Naive thymus-derived CD4-positive, alpha-beta T cell (primary cell): ENCODE measurements at regions of chr5 and their contacts with region 1.

Region 1: GRCh38 chr5:74640450-74640953 is at the start of gene ENC1:
- DNase-seq: peak; percentile 64 to 88 (median 75)
- ATAC-seq: peak; percentile 86
- H3K4me3 ChIP-seq: peak within 1 kb of the TSS; percentile 42
- H3K4me3 Mint-ChIP-seq: peak within 1 kb of the TSS; percentile 81 to 99 (median 92)
- H3K27ac ChIP-seq: peak within 1 kb of the TSS; percentile 72
- H3K27ac Mint-ChIP-seq: peak within 1 kb of the TSS in 8 of 9 donors; percentile 42 to 90 (median 74)
- H3K4me1 ChIP-seq: peaks cover 3 to 4% of the 10 kb centered on the region in 2 donors
- H3K4me1 Mint-ChIP-seq: peaks cover 28 to 45% (median 31%) of the 10 kb centered on the region in 7 donors
- H3K27me3 ChIP-seq: no peaks in the 10 kb centered on the region
- H3K27me3 Mint-ChIP-seq: peaks cover 0 to 79% (median 34%) of the 10 kb centered on the region in 5 donors
- total RNA-seq, gene ENC1: 1.3 to 18.1 (median 1.6) TPM

Region 2: DNA sequence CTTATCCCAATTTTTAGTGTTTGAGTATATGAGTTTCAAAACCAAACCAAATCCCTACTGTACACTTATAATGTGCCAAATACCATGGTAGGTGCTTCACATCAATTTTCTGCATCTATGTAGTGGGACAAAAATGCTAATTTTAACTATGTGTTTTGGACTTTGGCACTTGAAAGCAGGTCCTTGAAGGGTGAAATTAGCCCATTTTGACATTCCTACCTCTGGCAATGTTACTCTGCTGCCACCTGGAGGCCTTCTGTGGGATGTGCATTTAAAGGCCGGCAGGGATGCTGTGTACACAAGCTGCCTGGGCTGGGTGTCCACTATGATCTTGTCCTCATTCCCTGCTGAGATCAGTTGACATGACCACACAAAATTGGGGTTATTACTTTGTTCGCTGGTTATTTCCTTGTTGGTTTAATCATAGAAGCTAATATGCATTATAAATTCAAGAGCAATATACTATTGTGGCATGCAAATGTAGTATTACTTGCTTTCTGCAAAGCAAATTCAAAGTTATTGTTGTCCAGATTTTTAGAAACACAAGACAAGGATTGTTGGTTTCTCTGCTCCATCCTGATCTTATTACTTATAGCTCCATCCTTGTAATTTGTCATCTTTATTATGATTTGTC is 847.7 kb before region 1 on chr5:
- CTCF ChIA-PET with region 1: no interaction called
- POLR2A ChIA-PET with region 1: no interaction called
- intact Hi-C with region 1: loop called in 1 of 2 experiments (anchors 10 kb)
- DNase-seq: peak in 8 of 9 donors; percentile 37 to 62 (median 46)
- ATAC-seq: peak; percentile 83
- H3K4me3 ChIP-seq: no peak overlapping the region
- H3K4me3 Mint-ChIP-seq: no peak overlapping the region
- H3K27ac ChIP-seq: no peak overlapping the region
- H3K27ac Mint-ChIP-seq: no peak overlapping the region
- H3K4me1 ChIP-seq: no peaks in the 10 kb centered on the region
- H3K4me1 Mint-ChIP-seq: peaks cover 0 to 8% (median 3%) of the 10 kb centered on the region in 7 donors
- H3K27me3 ChIP-seq: no peaks in the 10 kb centered on the region
- H3K27me3 Mint-ChIP-seq: peaks cover 10 to 42% (median 31%) of the 10 kb centered on the region in 5 donors

Region 3: GRCh38 chr5:74035521-74035981 is 605.0 kb before region 1 on chr5:
- CTCF ChIA-PET with region 1: no interaction called
- POLR2A ChIA-PET with region 1: no interaction called
- intact Hi-C with region 1: loop called in 1 of 2 experiments (anchors 10 kb)
- DNase-seq: no peak
- ATAC-seq: peak; percentile 32
- H3K4me3 ChIP-seq: no peak overlapping the region
- H3K4me3 Mint-ChIP-seq: peak overlapping the region in 1 of 10 donors; percentile 58
- H3K27ac ChIP-seq: no peak overlapping the region
- H3K27ac Mint-ChIP-seq: no peak overlapping the region
- H3K4me1 ChIP-seq: no peaks in the 10 kb centered on the region
- H3K4me1 Mint-ChIP-seq: peaks cover 0 to 10% (median 0%) of the 10 kb centered on the region in 7 donors
- H3K27me3 ChIP-seq: no peaks in the 10 kb centered on the region
- H3K27me3 Mint-ChIP-seq: peaks cover 6 to 16% (median 8%) of the 10 kb centered on the region in 5 donors

Region 4: DNA sequence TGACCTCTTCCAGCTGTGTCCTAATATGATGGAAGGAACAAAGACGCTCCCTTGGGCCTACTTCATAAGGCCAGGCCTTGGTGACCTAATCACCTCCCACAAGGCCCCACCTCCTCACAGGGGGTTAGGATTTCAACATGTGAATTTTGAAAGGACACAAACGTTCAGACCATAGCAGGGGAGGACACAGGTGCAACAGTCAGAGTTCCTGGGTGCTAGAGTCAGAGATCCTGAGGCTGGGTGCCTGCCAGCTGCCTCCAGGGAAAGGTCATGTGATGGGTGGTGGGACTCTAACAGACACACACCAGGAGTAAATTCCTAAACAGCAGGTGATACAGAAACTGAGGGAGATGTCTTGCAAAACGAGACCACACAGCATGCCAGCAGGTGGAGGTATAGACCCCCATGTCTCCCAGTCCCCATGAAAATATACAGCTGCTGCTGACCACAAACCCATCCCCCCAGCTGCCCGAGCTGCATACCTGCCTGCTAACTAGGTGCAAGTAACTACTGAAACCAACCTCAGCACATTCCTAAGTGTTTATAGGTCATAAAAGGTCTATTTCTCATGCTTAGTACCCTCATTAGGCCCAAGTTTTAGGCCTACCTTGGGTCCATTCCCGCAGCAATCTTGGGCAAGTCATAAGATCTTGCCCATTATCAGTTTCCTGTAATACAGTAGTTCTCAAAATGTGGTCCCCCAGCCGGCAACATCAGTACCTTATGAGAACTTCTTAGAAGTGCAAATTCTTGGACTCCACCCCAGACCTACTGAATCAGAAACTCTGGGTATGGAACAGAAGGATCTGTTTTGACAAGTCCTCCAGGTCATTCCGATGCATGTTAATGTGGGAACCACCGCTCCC is 245.4 kb before region 1 on chr5:
- CTCF ChIA-PET with region 1: no interaction called
- POLR2A ChIA-PET with region 1: no interaction called
- intact Hi-C with region 1: loop called (anchors 1 kb)
- DNase-seq: no peak
- ATAC-seq: no peak
- H3K4me3 ChIP-seq: no peak overlapping the region
- H3K4me3 Mint-ChIP-seq: no peak overlapping the region
- H3K27ac ChIP-seq: no peak overlapping the region
- H3K27ac Mint-ChIP-seq: no peak overlapping the region
- H3K4me1 ChIP-seq: no peaks in the 10 kb centered on the region
- H3K4me1 Mint-ChIP-seq: peaks cover 0 to 22% (median 0%) of the 10 kb centered on the region in 7 donors
- H3K27me3 ChIP-seq: no peaks in the 10 kb centered on the region
- H3K27me3 Mint-ChIP-seq: peaks cover 0 to 2% (median 0%) of the 10 kb centered on the region in 5 donors

Region 5: GRCh38 chr5:74562122-74562521 is 78.4 kb before region 1 on chr5:
- CTCF ChIA-PET with region 1: no interaction called
- POLR2A ChIA-PET with region 1: no interaction called
- intact Hi-C with region 1: no loop called
- DNase-seq: no peak
- ATAC-seq: no peak
- H3K4me3 ChIP-seq: no peak overlapping the region
- H3K4me3 Mint-ChIP-seq: no peak overlapping the region
- H3K27ac ChIP-seq: no peak overlapping the region
- H3K27ac Mint-ChIP-seq: no peak overlapping the region
- H3K4me1 ChIP-seq: no peaks in the 10 kb centered on the region
- H3K4me1 Mint-ChIP-seq: peaks cover 0 to 5% (median 0%) of the 10 kb centered on the region in 7 donors
- H3K27me3 ChIP-seq: no peaks in the 10 kb centered on the region
- H3K27me3 Mint-ChIP-seq: peaks cover 0 to 14% (median 7%) of the 10 kb centered on the region in 5 donors

Region 6: GRCh38 chr5:74576941-74577456 is 63.5 kb before region 1 on chr5:
- CTCF ChIA-PET with region 1: no interaction called
- POLR2A ChIA-PET with region 1: interaction called, 3 read pairs
- intact Hi-C with region 1: loop called (anchors 1 to 2 kb)
- DNase-seq: peak in 7 of 9 donors; percentile 6 to 43 (median 24)
- ATAC-seq: peak; percentile 41
- H3K4me3 ChIP-seq: peak overlapping the region; percentile 48
- H3K4me3 Mint-ChIP-seq: peak overlapping the region; percentile 41 to 92 (median 71)
- H3K27ac ChIP-seq: peak overlapping the region; percentile 8
- H3K27ac Mint-ChIP-seq: peak overlapping the region; percentile 51 to 97 (median 81)
- H3K4me1 ChIP-seq: peaks cover 21 to 22% of the 10 kb centered on the region in 2 donors
- H3K4me1 Mint-ChIP-seq: peaks cover 10 to 51% (median 30%) of the 10 kb centered on the region in 7 donors
- H3K27me3 ChIP-seq: no peaks in the 10 kb centered on the region
- H3K27me3 Mint-ChIP-seq: peaks cover 0 to 12% (median 0%) of the 10 kb centered on the region in 5 donors

Region 7: DNA sequence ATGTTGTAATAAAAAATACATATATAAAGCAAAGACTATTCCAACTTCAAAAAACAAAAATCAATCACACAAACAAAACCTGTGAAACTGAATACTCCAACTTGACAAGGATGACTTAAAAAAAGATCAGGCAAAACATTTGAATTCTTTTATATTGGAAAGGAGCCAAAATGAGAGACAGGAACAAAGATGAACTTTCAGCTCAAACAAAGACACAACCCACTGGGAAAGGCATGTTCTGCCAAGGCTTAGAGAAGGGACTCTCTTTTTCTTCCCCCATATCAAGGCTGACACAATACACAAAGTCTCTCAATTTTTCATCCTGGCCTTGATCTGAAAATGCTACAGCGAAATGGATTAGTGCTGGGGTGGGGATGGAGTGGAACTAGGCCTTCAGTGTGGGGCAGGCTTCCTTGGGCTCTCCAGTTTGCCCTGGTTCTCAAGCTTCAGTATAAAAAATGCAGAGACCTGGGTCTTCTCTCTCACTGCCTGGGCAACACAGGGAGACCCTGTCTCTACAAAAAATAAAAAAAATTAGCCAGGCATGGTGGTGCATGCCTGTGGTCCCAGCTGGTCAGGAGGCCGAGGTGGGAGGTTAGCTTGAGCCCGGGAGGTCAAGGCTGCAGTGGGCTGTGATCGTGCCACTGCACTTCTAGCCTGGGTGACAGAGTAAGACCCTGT is 237.3 kb after region 1 on chr5:
- CTCF ChIA-PET with region 1: no interaction called
- POLR2A ChIA-PET with region 1: no interaction called
- intact Hi-C with region 1: no loop called
- DNase-seq: no peak
- ATAC-seq: no peak
- H3K4me3 ChIP-seq: no peak overlapping the region
- H3K4me3 Mint-ChIP-seq: no peak overlapping the region
- H3K27ac ChIP-seq: no peak overlapping the region
- H3K27ac Mint-ChIP-seq: peak overlapping the region in 1 of 9 donors; percentile 45
- H3K4me1 ChIP-seq: no peaks in the 10 kb centered on the region
- H3K4me1 Mint-ChIP-seq: no peaks in the 10 kb centered on the region
- H3K27me3 ChIP-seq: no peaks in the 10 kb centered on the region
- H3K27me3 Mint-ChIP-seq: peaks cover 0 to 5% (median 4%) of the 10 kb centered on the region in 5 donors